ENCODE measurements at regions of chr20 and their contacts with region 1.

Region 1: DNA sequence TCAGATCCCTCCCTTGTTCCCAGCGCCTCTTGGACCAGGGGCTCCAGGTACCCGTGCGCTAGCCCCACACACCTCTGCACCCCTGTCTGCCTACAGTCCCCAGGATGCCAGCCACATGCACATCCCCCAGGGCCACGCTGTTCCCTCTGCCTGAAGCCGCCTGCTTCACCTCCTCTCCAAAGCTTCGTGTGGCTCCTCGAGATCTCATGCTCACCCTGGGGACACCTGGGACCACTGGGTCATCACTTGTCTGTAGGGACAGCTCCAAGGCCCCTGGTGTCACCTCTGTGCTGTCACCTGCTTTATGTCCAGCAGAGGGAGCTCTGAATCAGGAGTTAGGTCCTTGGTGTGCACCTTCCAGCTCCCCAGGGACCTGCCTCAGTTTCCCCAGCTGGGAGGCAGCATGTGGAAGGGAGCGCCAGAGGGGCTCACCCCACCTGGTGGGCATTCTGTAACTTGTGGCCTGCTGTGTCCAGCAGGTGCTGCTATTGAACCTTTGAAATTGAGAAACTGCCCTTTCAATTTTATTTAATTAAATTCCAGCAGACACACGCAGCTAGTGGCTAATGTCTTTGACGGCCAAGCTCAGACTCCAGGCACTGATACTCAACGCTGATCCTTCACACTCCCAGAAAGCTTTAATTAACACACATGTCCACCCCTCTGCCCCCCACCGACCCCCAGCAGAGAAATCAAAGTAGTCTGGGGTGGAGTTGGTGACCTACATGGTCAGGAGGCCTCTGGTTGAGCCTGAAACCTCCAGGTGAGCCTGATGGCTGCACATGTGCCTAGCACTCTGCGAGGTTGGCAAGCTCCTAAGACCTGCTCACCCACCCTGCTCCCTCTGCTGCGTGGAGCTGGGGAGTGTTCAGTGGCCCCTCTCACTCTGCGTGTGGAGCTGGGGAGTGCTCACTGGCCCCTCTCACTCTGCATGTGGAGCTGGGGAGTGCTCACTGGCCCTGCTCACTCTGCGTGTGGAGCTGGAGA is 7.6 kb upstream of the YTHDF1 start:
- DNase-seq: no peak
- H3K4me3 ChIP-seq: no peak overlapping the region
- H3K27ac ChIP-seq: no peak overlapping the region
- H3K27me3 ChIP-seq: peaks cover 22% of the 10 kb centered on the region
- CTCF ChIP-seq: peak; percentile 82

Region 2: GRCh38 chr20:63238514-63239125 is 15.1 kb after region 1 on chr20:
- CTCF ChIA-PET with region 1: interaction called, 45 read pairs
- POLR2A ChIA-PET with region 1: no interaction called
- DNase-seq: no peak
- H3K4me3 ChIP-seq: no peak overlapping the region
- H3K27ac ChIP-seq: no peak overlapping the region
- H3K27me3 ChIP-seq: peaks cover 9% of the 10 kb centered on the region
- CTCF ChIP-seq: no peak

Region 3: DNA sequence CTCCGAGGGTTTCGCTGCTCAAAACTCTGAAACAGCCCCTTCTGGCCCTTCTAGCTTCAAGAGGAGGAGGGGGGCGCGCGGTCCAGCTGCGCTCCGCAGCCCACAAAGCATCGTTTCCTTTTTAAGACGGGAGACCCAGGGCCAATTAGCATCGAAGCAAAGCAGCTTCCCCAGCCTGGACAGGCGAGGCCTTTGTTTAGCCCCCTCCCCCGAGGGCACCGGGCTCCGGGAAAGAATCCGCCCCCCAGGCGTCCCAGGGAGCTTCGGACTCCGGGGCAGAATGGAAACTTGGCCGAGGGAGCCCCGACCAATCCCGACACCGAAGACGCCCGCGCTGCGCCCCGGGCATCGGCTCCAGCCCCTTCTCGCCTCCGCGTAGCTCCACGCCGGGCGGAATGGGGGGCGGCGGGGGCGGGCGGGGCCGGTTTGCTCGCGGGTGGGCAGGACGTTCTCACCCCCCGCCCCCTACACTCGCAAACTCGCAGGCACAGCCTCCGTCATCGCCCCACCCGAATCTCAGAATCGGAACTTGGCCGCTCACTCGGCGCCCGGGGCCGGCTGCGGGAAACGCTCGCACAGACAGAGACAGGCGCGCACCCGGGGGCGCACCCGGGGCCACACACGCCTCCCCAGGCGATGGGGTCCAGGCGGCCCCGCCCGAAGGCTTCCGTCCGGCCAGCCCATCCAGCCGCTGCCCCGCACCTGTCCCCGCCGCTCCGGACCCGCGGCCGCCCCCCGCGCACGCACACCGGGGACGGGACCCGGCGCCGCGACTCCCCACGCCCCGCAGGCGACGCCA is 30.1 kb after region 1 on chr20:
- CTCF ChIA-PET with region 1: interaction called, 12 read pairs
- POLR2A ChIA-PET with region 1: interaction called, 3 read pairs
- DNase-seq: no peak
- H3K4me3 ChIP-seq: 0 out of 2 replicates have a peak overlapping the region, but pooled peaks have one; percentile 10
- H3K27ac ChIP-seq: no peak overlapping the region
- H3K27me3 ChIP-seq: peaks cover 53% of the 10 kb centered on the region
- CTCF ChIP-seq: no peak

Region 4: DNA sequence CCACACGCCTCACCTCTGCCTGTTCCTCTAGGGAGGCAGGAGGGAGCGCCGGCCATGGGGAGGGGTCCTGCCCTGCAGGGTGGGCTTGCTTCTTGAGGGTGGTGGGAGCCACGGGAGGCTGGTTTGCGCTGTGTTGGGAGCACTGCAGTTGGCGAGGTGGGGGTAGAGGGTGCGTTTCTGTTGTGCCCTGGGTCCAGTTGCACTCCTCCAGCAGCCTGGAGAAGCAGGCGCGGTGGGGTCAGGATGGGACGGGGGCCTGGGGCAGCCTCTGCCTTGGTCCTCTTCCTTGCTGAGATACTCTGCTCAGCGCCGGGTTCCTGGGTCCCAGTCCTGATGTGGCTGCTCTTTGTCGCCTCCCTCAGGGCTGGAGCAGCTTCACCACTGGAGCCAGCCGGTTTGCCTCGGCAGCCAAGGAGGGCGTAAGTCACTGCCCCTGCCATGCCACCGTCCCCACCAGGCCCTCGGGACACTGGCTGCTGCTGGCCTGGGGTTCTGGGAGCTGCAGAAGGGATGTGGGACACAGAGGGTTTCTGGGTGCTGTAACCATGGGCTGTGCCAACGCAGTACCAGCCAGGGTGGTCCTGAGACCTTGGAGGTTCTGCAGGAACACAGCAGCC is 57.5 kb after region 1 on chr20:
- CTCF ChIA-PET with region 1: interaction called, 22 read pairs
- POLR2A ChIA-PET with region 1: no interaction called
- DNase-seq: no peak
- H3K4me3 ChIP-seq: no peak overlapping the region
- H3K27ac ChIP-seq: no peak overlapping the region
- H3K27me3 ChIP-seq: no peaks in the 10 kb centered on the region
- CTCF ChIP-seq: peak; percentile 41

Region 5: GRCh38 chr20:63381807-63382322 is 158.4 kb after region 1 on chr20:
- CTCF ChIA-PET with region 1: interaction called, 27 read pairs
- POLR2A ChIA-PET with region 1: no interaction called
- DNase-seq: no peak
- H3K4me3 ChIP-seq: no peak overlapping the region
- H3K27ac ChIP-seq: no peak overlapping the region
- H3K27me3 ChIP-seq: peaks cover 14% of the 10 kb centered on the region
- CTCF ChIP-seq: peak; percentile 83